CD4-positive, alpha-beta memory T cell (primary cell): ENCODE measurements at regions of chr5 and their contacts with region 1.

Region 1: DNA sequence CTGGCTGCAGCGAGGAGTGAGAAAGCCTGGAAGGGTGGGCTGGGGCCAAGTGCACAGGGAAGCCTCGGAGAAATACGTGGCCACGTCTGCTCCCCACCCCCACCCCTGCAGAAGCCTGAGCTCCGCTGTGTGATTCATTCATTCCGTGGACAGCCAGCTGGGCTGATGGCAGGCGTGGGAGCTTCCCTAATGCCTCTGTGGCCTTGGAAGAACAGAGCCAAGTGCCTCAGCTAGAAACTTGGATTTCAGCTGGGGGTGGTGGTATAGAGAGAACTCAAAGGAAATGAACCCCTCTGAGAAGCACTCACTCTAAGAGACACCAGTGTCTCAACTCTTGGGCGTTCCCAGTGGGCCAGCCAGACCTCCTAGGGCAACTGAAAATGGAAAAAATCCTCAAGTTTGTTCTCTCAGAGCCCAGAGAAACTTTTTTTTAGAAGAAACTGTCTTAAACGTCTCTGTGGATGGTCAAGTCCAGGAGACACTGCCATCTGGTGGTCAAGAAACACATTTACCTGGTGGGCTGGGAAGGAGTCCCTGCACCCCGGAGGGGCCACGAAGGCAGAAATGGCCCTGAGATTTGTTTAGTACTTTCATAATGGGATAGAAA is 18.0 kb downstream of the ATOX1 start:
- DNase-seq: peak; percentile 38 to 58 (median 52)
- H3K4me3 ChIP-seq: no peak overlapping the region
- H3K4me3 Mint-ChIP-seq: peak overlapping the region in 1 of 8 donors; percentile 40
- H3K27ac ChIP-seq: no peak overlapping the region
- H3K27ac Mint-ChIP-seq: peak overlapping the region in 4 of 7 donors; percentile 5 to 75 (median 55)
- H3K4me1 ChIP-seq: peaks cover 19% of the 10 kb centered on the region
- H3K4me1 Mint-ChIP-seq: peaks cover 14 to 24% (median 22%) of the 10 kb centered on the region in 4 donors
- H3K27me3 ChIP-seq: no peaks in the 10 kb centered on the region
- H3K27me3 Mint-ChIP-seq: no peaks in the 10 kb centered on the region

Region 2: DNA sequence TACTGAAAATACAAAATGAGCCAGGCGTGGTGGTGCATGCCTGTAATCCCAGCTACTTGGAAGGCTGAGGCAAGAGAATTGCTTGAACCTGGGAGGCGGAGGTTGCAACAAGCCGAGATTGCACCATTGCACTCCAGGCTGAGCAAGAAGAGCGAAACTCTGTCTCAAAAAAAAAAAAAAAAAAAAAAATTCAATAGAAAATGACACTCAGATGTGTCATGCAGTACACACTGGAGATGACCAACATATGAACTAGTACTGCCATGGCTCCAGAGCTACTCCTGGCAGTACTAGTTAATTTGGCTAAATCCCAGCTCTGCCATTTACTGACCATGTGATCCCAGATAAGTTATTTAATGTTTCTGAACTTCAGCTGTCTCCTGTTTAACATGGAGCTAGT is 10.7 kb after region 1 on chr5:
- CTCF ChIA-PET with region 1: interaction called, 22 read pairs
- POLR2A ChIA-PET with region 1: interaction called, 4 read pairs
- intact Hi-C with region 1: no loop called
- DNase-seq: no peak
- H3K4me3 ChIP-seq: no peak overlapping the region
- H3K4me3 Mint-ChIP-seq: no peak overlapping the region
- H3K27ac ChIP-seq: no peak overlapping the region
- H3K27ac Mint-ChIP-seq: peak overlapping the region in 1 of 7 donors; percentile 7
- H3K4me1 ChIP-seq: peaks cover 36% of the 10 kb centered on the region
- H3K4me1 Mint-ChIP-seq: peaks cover 23 to 66% (median 39%) of the 10 kb centered on the region in 4 donors
- H3K27me3 ChIP-seq: no peaks in the 10 kb centered on the region
- H3K27me3 Mint-ChIP-seq: no peaks in the 10 kb centered on the region

Region 3: DNA sequence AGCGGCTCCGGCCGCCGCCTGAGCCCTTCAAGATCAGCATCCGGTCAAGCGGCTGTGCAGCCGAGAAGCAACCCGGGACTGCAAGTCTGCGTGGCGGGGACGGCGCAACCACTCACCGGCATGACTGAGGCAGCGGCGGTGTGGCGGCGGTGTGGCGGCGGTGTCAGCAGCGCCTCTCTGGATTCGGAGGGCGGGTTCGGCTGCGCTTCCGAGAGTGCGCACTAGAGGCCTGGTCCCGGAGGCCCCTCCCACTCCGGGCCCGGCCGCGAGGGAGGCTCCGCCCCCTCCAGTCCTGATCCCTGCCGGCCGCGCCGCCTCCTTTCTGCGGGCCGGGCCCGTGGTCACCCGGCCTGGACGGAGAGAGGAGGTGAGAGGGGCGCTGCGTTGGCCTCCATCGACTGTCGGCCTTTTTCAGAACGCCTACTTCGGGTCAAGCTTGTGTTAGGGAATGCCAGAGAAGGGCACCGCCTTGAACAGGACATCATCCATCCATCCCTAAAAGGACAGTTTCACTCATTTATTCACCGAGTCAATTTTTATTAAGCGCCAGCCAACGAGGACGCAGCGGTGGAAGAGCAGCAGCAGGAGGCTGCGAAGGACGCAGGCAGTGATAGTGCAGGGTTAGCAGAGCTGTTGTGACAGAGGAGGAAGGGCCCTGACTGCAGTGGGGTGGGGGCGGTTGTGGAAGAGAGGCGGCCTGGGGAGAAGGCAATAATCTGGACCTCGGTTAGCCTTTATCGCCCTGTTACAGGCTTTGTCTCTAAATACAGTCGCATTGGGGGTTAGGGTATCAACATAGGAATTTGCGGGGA is 18.2 kb after region 1 on chr5 and contains the start of gene ATOX1:
- CTCF ChIA-PET with region 1: interaction called, 22 read pairs
- POLR2A ChIA-PET with region 1: interaction called, 4 read pairs
- intact Hi-C with region 1: no loop called
- DNase-seq: peak; percentile 88 to 90 (median 90)
- H3K4me3 ChIP-seq: peak within 1 kb of the TSS; percentile 90 to 93
- H3K4me3 Mint-ChIP-seq: peak within 1 kb of the TSS; percentile 86 to 99 (median 91)
- H3K27ac ChIP-seq: peak within 1 kb of the TSS; percentile 85
- H3K27ac Mint-ChIP-seq: peak within 1 kb of the TSS; percentile 77 to 97 (median 95)
- H3K4me1 ChIP-seq: peaks cover 38% of the 10 kb centered on the region
- H3K4me1 Mint-ChIP-seq: peaks cover 25 to 55% (median 34%) of the 10 kb centered on the region in 4 donors
- H3K27me3 ChIP-seq: no peaks in the 10 kb centered on the region
- H3K27me3 Mint-ChIP-seq: no peaks in the 10 kb centered on the region
- total RNA-seq, gene ATOX1: 28.2 to 31.0 TPM

Region 4: DNA sequence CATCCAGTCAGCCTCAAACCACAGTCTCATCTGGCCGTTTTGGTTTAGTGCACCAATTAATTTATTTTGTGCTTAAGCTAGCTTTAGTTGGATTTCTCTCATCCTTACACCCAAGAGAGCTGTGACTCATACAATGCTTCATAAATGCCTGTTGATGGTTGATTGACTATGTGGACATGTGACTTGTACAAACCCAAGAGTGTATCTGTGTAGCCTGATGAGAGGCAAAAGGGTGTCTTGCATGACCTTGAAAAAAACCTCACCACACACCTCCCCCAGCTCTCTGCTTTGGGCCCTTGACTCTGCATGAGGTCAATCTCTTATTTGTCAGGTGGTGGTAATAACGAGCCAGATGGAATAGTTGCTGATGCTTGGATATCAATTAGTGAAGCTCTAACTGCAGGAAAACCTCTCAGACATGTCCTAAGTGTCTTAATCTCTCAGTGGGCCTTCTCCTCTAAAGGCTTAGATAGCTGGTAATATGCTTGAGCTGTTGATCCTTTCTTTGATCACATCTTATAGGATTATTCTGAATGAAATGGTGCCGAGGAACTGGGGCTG is 194.8 kb after region 1 on chr5:
- CTCF ChIA-PET with region 1: no interaction called
- POLR2A ChIA-PET with region 1: no interaction called
- intact Hi-C with region 1: no loop called
- DNase-seq: no peak
- H3K4me3 ChIP-seq: no peak overlapping the region
- H3K4me3 Mint-ChIP-seq: no peak overlapping the region
- H3K27ac ChIP-seq: no peak overlapping the region
- H3K27ac Mint-ChIP-seq: no peak overlapping the region
- H3K4me1 ChIP-seq: no peaks in the 10 kb centered on the region
- H3K4me1 Mint-ChIP-seq: no peaks in the 10 kb centered on the region
- H3K27me3 ChIP-seq: no peaks in the 10 kb centered on the region
- H3K27me3 Mint-ChIP-seq: no peaks in the 10 kb centered on the region